ENCODE measurements at regions of chr20 and their contacts with region 1.

Region 1: DNA sequence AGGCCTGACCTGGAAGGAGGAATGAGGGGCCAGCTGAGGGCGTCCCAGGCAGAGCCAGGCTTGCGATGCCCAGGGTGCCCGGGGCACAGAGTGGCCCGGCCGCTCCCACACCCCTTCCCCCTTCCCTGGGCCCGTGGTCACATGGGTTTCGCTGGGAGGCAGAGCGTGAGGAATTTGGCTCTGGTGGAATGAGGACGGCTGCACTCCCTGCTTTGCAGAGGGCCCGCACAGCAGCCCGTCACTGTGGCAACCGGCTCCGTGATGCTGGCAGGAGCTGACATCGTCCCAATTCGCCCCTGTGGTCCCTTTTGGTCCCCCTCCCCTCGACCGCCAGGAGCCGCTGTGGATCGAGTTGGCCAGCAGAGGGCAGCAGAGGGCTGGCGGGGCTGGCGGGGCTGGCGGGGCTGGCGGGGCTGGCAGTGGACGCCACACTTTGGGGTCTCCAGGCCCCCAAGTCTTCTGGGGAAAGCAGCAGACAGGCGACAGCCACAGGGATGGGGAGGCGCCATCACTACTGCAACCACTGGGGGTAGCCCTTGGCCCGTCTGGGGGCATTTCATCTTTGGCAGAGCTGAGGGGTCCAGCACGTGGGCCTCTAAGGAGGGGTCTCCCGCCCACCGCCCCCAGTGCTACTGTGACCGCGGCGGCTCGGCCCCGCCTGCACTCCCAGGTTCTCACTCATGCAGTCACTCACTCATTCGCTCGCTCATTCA is 49.6 kb upstream of the BHLHE23 start:
- DNase-seq: peak; percentile 66
- H3K4me3 Mint-ChIP-seq: no peak overlapping the region
- H3K27ac Mint-ChIP-seq: no peak overlapping the region
- H3K4me1 Mint-ChIP-seq: no peaks in the 10 kb centered on the region
- H3K27me3 Mint-ChIP-seq: peaks cover 15% of the 10 kb centered on the region

Region 2: DNA sequence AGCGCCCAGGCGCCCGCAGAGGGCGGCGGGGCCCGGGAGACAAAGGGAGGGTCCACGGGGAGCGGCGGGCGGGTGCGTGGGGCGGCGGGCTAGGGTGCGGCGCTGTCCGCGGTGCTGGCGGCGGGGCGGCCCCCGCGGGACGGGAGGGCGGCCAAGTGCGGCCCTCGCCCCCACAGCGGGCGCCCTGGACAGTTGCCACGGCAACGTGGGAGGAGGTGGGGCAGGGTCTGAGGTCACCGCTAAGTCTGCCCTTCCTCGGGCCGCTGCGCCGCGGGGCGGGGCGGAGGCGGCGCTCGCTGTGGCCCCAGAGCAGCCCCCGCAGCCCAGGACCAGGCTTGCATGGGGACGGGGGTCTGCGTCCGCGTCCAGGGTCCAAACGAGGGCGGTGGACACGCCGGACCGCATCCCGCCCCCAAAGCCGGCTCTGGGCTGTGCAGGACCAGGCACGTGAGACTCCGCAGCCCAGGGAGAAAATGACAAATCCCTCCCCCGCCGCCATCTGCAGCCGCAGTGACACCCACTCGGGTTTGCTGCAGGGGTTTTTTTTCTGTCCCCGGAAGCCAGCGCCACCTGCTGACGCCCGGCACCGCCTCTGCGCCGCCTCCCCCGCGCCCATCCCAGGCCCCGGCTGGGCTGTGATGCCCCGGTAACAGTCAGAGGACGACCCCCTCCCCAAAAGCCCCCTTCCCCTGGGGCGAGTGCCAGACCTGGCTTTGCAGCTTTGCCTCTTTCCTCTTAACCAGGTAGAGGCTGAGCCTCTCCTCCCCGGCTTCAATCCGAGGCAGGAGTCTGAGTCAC is 122.7 kb after region 1 on chr20:
- CTCF ChIA-PET with region 1: interaction called, 7 read pairs
- POLR2A ChIA-PET with region 1: no interaction called
- intact Hi-C with region 1: loop called (anchors 5 kb)
- DNase-seq: peak; percentile 78
- H3K4me3 Mint-ChIP-seq: no peak overlapping the region
- H3K27ac Mint-ChIP-seq: no peak overlapping the region
- H3K4me1 Mint-ChIP-seq: peaks cover 13% of the 10 kb centered on the region
- H3K27me3 Mint-ChIP-seq: peaks cover 48% of the 10 kb centered on the region